ENCODE measurements at regions of chr14 and their contacts with region 1.

Region 1: DNA sequence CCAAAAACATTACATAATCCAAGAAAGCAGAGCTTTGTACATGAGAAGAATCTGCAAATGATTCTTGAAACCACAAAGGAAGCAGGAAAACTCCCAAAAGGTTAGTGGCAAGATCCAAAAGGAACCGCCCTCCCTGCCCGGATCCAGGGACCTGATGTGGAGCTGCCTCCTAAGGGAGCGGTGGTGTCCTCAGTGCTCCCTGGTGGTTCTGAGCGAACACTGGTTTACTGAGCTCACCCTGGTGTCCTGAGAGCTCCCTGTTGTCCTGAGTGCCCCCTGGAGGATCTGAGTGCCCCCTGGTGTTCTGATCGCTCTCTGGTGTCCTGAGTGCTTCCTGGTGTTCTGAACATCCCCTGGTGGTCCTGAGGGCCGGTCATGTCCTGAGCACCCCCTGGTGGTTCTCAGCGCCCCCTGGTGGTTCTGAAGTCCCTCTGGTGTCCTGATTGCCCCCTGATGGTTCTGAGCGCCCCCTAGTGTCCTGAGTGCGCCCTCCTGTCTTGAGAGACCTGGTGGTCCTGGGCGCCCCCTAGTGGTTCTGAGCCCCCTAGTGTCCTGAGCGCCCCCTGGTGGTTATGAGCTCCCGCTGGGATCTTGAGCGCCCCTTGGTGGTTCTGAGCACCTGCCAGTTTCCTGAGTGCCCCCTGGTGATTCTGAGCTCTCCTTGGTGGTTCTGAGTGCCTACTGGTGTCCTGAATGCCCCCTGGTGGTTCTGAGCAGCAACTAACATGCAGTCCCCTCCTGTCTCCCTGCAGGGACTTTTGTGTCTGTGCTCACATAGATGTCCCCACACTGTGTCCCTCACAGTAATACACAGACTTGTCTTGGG is 891.1 kb downstream of the TMEM121 start:
- DNase-seq: peak; percentile 75
- CTCF ChIP-seq: peak; percentile 100

Region 2: GRCh38 chr14:106343626-106344025 is 73.8 kb before region 1 on chr14:
- CTCF ChIA-PET with region 1: interaction called, 85 read pairs
- POLR2A ChIA-PET with region 1: no interaction called
- DNase-seq: no peak
- CTCF ChIP-seq: no peak

Region 3: GRCh38 chr14:106442857-106443256 is 25.4 kb after region 1 on chr14:
- CTCF ChIA-PET with region 1: interaction called, 68 read pairs
- POLR2A ChIA-PET with region 1: no interaction called
- DNase-seq: peak; percentile 6
- CTCF ChIP-seq: peak; percentile 42

Region 4: GRCh38 chr14:106511006-106511799 is 93.8 kb after region 1 on chr14:
- CTCF ChIA-PET with region 1: interaction called, 33 read pairs
- POLR2A ChIA-PET with region 1: no interaction called
- DNase-seq: no peak
- CTCF ChIP-seq: no peak

Region 5: DNA sequence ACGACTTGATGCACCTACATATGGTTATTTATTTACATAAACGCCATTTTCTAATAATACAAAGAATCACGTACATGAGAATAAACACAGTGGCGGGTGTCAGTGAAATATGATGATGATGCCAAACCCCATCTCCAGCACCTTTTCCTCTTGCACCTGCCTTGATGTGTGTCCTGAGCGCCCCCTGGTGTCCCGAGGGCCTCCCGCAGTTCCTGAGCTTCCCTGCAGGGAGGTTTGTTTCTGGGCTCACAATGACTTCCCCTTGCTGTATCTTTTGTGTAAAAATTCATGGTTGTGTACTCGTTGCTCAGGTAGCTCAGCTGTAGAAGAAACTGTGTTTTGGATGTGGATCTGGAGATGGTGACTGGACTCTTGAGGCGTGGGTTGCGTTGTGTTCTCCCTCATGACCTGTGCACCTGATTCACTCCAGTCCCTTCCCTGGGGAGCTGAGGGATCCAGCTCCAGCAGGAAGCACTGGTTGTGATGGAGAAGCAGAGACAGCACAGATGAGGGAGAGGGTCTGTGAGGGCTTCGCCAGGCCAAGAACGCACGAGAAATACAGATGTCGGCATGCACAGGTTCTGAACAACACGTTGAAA is 146.7 kb after region 1 on chr14:
- CTCF ChIA-PET with region 1: interaction called, 22 read pairs
- POLR2A ChIA-PET with region 1: no interaction called
- DNase-seq: peak; percentile 62
- CTCF ChIP-seq: peak; percentile 87

Region 6: DNA sequence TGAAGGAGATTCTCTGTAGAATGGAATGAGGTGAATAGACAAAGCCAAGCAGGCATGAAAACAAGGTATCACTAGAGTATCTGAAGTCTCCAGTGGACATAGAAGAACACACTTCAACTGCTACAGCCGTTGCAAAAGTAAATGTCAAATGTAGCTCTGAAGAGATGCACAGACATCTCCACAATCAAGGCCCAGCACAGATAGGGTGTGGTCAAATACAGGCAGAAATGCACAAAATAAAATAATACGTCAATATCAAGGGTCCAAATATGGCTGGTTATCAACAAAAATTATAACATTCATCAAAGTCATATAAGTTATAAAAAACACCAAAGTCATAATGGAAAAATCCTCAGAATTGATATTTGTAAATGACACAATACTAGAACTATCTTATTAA is 216.3 kb after region 1 on chr14:
- CTCF ChIA-PET with region 1: no interaction called
- POLR2A ChIA-PET with region 1: no interaction called
- DNase-seq: no peak
- CTCF ChIP-seq: no peak

Region 7: DNA sequence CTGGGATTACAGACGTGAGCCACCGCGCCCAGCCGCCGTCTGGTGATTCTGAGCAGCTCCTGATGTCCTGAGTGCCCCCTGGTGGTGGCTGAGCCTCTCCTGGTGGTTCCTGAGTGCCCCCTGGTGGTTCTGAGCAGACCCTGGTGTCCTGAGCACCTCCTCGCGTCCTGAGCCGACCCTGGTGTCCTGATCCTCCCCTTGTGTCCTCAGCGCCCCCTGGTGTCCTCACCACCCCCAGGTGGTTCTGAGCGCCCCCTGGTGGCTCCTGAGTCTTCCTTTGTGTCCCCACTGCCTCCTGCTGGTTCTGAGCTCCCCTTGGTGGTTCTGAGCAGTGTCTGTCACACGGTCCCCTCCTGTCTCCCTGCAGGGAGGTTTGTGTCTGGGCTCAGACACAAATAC is 413.9 kb after region 1 on chr14:
- CTCF ChIA-PET with region 1: interaction called, 10 read pairs
- POLR2A ChIA-PET with region 1: no interaction called
- DNase-seq: peak; percentile 54
- CTCF ChIP-seq: peak; percentile 92